Dorsolateral prefrontal cortex (tissue), 120 donors: ENCODE measurements at regions of chr18 and their contacts with region 1.

Region 1: GRCh38 chr18:13813271-13813849 is 10.6 kb upstream of the MC5R start:
- DNase-seq: peak in 9 of 10 donors; percentile 48 to 81 (median 65)
- H3K4me3 ChIP-seq: no peak overlapping the region
- H3K27ac ChIP-seq: no peak overlapping the region
- H3K27me3 ChIP-seq: no peaks in the 10 kb centered on the region
- CTCF ChIP-seq: peak; percentile 63 to 91 (median 84)

Region 2: DNA sequence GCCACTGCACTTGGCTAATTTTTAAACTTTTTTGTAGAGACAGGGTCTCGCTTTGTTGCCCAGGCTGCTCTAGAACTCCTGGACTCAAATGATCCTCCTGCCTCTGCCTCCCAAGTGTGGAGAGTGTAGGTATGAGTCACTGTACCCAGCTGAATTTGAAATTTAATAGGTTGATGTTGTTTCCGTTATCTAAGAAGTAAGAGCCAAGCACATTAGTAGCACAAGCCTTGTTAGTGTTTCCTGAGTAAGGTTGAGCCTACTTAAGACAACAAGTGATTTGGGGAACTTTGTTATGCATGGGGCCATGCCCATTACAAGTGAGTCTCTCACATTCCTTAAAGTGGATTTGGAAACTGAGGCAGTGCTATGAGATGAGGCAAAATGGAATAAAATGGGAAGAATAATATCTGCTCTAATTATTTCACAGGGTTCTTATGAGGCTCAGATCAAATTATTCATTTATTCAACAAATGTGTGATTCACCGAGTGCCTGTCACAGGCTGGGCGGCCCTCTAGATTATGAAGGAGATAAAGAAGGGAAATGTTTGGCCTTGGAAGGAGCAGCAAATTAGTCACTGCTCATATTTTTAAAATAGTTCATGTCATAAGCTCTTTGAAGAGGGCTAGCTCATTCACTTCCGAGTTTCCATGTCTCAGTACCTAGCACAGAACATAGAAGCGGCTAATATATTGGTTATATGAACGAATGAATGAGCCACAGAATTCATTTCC is 377.6 kb before region 1 on chr18:
- intact Hi-C with region 1: no loop called
- DNase-seq: no peak
- H3K4me3 ChIP-seq: no peak overlapping the region
- H3K27ac ChIP-seq: peak overlapping the region in 9 of 59 donors; percentile 1 to 85 (median 22)
- H3K27me3 ChIP-seq: no peaks in the 10 kb centered on the region
- CTCF ChIP-seq: no peak

Region 3: GRCh38 chr18:13558124-13558523 is 255.2 kb before region 1 on chr18:
- intact Hi-C with region 1: loop called in 1 of 2 experiments (anchors 5 kb)
- DNase-seq: peak in 5 of 10 donors; percentile 56 to 72 (median 69)
- H3K4me3 ChIP-seq: peak overlapping the region in 3 of 59 donors; percentile 7 to 35 (median 10)
- H3K27ac ChIP-seq: peak overlapping the region in 54 of 59 donors; percentile 8 to 100 (median 86)
- H3K27me3 ChIP-seq: no peaks in the 10 kb centered on the region
- CTCF ChIP-seq: peak; percentile 52 to 90 (median 78)